ENCODE measurements at regions of chr14 and their contacts with region 1.

Region 1: DNA sequence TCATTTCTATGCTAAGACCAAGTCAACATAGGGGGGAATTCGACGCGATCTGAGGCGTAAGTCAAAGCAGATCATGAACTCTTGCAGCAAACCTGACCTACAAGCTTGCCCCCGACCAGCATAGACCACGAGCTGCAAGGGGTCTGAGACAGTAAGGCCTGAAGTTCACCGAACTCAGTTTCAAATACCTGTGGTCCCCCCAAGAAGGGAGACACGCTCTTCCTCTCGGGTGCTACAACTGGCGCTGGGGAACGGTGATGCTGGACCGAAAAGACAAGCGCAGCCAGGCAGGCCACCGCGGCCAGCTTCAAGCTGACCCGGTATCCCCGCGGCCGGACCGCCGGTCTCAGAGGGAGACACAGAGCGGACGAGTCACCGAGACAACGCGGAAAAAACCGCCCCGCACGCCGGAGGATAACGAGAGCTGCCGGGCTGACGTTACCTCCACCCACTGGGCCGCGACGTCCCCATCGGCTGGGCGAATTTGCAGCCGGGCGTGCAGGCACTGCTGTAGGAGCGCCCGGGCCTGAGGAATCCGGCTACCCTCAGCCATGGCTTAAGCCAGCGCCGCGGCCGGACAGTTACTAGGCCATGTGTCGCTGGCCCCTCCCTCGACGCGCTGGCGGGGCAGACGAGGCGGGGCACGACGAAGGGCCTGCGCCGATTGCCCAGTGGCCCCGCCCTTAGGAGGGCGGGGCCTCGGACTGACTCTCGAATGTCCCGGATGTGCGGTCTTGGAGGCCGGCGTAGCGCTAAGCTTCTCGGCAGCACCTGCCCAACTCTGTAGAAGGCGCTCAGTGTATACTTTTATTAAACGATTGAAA is at the start of gene DTD2:
- DNase-seq: peak; percentile 80 to 93 (median 89)
- ATAC-seq: peak; percentile 96 to 98 (median 98)
- H3K4me3 ChIP-seq: peak within 1 kb of the TSS; percentile 49 to 89
- H3K4me3 Mint-ChIP-seq: peak within 1 kb of the TSS; percentile 95 to 97 (median 96)
- H3K27ac ChIP-seq: peak within 1 kb of the TSS; percentile 70
- H3K27ac Mint-ChIP-seq: peak within 1 kb of the TSS; percentile 88 to 92
- H3K4me1 ChIP-seq: peaks cover 9% of the 10 kb centered on the region in 2 experiments
- H3K4me1 Mint-ChIP-seq: peaks cover 34 to 40% (median 34%) of the 10 kb centered on the region in 3 donors
- H3K27me3 ChIP-seq: no peaks in the 10 kb centered on the region
- H3K27me3 Mint-ChIP-seq: peaks cover 0 to 4% of the 10 kb centered on the region in 2 donors
- total RNA-seq, gene DTD2: 11.3 to 23.6 (median 18.1) TPM

Region 2: GRCh38 chr14:31420319-31421111 is 36.5 kb before region 1 on chr14 and contains the start of gene HEATR5A:
- CTCF ChIA-PET with region 1: interaction called in 1 of 2 experiments, 17 read pairs
- POLR2A ChIA-PET with region 1: interaction called, 3 to 12 read pairs
- DNase-seq: peak; percentile 78 to 96 (median 89)
- ATAC-seq: peak; percentile 96 to 98 (median 97)
- H3K4me3 ChIP-seq: peak within 1 kb of the TSS; percentile 94 to 98
- H3K4me3 Mint-ChIP-seq: peak within 1 kb of the TSS; percentile 94 to 98 (median 96)
- H3K27ac ChIP-seq: peak within 1 kb of the TSS; percentile 57
- H3K27ac Mint-ChIP-seq: peak within 1 kb of the TSS; percentile 85 to 94
- H3K4me1 ChIP-seq: peaks cover 3% of the 10 kb centered on the region in 2 experiments
- H3K4me1 Mint-ChIP-seq: peaks cover 14 to 32% (median 24%) of the 10 kb centered on the region in 3 donors
- H3K27me3 ChIP-seq: no peaks in the 10 kb centered on the region
- H3K27me3 Mint-ChIP-seq: no peaks in the 10 kb centered on the region
- total RNA-seq, gene HEATR5A: 7.5 to 13.2 (median 13.0) TPM

Region 3: DNA sequence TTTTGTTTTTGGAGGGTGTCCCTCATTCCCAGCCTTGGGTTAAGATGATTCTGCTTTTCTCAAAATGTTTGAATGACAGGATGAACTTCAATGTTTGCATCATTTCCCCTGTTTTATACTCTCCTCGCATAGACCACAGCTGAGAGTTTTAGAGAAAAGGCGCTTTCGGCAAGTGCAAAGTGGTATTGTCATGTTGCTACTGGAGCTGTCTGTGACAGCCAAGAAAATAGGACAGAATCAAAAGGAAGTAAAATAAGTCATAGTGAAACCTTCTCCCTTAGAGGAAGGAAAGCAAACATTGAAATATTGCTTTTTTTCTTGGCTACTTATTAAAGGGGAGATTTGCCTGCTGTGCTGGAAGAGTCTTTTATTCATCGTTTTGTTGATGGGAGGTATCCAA is 586.6 kb after region 1 on chr14:
- CTCF ChIA-PET with region 1: no interaction called
- POLR2A ChIA-PET with region 1: interaction called in 1 of 2 experiments, 14 read pairs
- DNase-seq: no peak
- ATAC-seq: no peak
- H3K4me3 ChIP-seq: no peak overlapping the region
- H3K4me3 Mint-ChIP-seq: no peak overlapping the region
- H3K27ac ChIP-seq: no peak overlapping the region
- H3K27ac Mint-ChIP-seq: no peak overlapping the region
- H3K4me1 ChIP-seq: no peaks in the 10 kb centered on the region
- H3K4me1 Mint-ChIP-seq: no peaks in the 10 kb centered on the region
- H3K27me3 ChIP-seq: no peaks in the 10 kb centered on the region
- H3K27me3 Mint-ChIP-seq: peaks cover 5 to 31% of the 10 kb centered on the region in 2 donors